ENCODE measurements at regions of chr9 and their contacts with region 1.

Region 1: GRCh38 chr9:125631391-125632085 is 75.5 kb downstream of the MAPKAP1 start:
- DNase-seq: no peak
- H3K4me3 ChIP-seq: no peak overlapping the region
- H3K27ac ChIP-seq: peak overlapping the region in 6 of 8 donors; percentile 18 to 78 (median 72)
- H3K4me1 ChIP-seq: peaks cover 48 to 87% (median 73%) of the 10 kb centered on the region in 6 donors
- H3K27me3 ChIP-seq: no peaks in the 10 kb centered on the region
- CTCF ChIP-seq: peak; percentile 23 to 61 (median 49)
- POLR2A ChIP-seq: no peak

Region 2: GRCh38 chr9:125558453-125559092 is 73.0 kb before region 1 on chr9:
- intact Hi-C with region 1: loop called (anchors 10 kb)
- DNase-seq: no peak
- H3K4me3 ChIP-seq: no peak overlapping the region
- H3K27ac ChIP-seq: no peak overlapping the region
- H3K4me1 ChIP-seq: peaks cover 0 to 29% (median 11%) of the 10 kb centered on the region in 6 donors
- H3K27me3 ChIP-seq: no peaks in the 10 kb centered on the region
- CTCF ChIP-seq: peak; percentile 48 to 86 (median 76)
- POLR2A ChIP-seq: no peak

Measured in spleen (tissue), 13 donors.